Activated CD4-positive, alpha-beta memory T cell treated with anti-CD3 and anti-CD28 coated beads, Interleukin-2, amount 10 ng/mL, durations not matched to agents 7 days and 5 days (primary cell): ENCODE measurements at regions of chr3 and their contacts with region 1.

Region 1: GRCh38 chr3:14178247-14179113 is at the starts of genes LSM3 and XPC:
- DNase-seq: peak; percentile 98
- H3K4me3 Mint-ChIP-seq: peak within 1 kb of the TSS; percentile 84
- H3K27ac Mint-ChIP-seq: peak within 1 kb of the TSS; percentile 92
- H3K4me1 Mint-ChIP-seq: peaks cover 70% of the 10 kb centered on the region
- H3K27me3 Mint-ChIP-seq: no peaks in the 10 kb centered on the region
- total RNA-seq, gene LSM3: 14.2 to 14.3 TPM
- total RNA-seq, gene XPC: 34.2 to 34.8 TPM

Region 2: DNA sequence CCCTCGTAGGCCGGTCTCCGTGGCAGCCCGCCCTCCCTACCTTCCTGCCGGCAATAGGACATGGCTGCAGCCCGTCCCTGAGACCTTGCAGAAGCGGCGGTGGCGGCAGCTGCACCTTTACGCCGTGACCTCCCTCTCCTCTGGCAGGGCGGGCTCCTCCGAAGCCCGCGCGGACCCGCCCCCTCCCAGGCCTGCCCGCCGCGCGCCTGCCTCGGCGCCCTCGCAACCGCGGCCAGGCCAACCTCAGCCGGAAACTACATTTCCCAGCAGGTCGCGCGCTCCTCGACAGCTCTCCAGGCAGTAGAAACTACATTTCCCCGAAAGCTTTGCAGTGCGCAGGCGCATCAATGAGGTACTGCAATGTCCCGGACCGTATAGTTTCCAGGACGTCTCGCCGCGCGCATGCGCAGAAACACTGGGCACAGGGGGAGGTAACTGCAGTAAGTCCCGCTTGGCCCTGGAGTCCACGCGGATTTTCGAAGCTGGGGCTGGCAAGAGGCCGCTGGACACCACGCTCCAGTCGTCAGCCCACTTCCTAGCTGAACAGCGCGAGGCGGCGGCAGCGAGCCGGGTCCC is 53.8 kb before region 1 on chr3 and contains the starts of genes CHCHD4 and TMEM43:
- CTCF ChIA-PET with region 1: interaction called, 13 read pairs
- POLR2A ChIA-PET with region 1: interaction called, 90 read pairs
- DNase-seq: peak; percentile 99
- H3K4me3 Mint-ChIP-seq: peak within 1 kb of the TSS; percentile 92
- H3K27ac Mint-ChIP-seq: peak within 1 kb of the TSS; percentile 90
- H3K4me1 Mint-ChIP-seq: peaks cover 61% of the 10 kb centered on the region
- H3K27me3 Mint-ChIP-seq: no peaks in the 10 kb centered on the region
- total RNA-seq, gene CHCHD4: 11.5 to 12.8 TPM
- total RNA-seq, gene TMEM43: 43.6 to 46.0 TPM

Region 3: DNA sequence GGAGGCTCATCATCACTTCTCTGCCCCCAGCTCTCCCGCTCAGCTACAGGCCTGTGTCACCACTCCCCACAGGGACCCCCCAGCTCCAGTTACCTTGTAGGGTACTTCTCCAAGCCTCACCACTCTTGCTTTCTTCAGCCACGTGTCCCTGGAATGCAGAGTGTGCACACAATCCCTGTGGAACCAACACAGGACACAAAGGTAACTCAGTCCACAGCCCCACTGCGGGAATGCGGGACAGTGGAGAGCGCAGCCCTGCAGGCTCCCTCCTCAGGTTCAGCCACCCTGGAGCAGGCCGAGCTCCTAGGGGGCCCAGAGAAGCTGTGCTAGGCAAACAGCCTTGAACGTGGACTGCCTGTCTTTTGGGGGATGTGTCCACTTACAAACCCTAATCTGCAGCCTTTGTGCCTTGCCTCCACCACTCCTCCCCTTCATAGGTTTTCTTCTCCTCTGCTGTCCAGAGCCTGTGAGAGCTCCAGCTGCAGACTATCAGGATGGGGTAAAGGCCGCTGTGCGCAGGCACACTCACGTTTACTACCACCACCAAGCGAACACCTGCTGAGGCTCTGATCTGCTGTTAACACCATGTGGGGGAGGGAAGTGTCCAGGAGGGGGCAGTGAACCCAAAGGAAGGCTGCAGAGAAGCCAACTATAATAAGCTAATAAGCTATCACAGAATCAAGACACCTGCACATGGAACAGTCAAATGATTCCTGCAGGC is 26.1 kb before region 1 on chr3:
- CTCF ChIA-PET with region 1: interaction called, 4 read pairs
- POLR2A ChIA-PET with region 1: interaction called, 11 read pairs
- DNase-seq: no peak
- H3K4me3 Mint-ChIP-seq: no peak overlapping the region
- H3K27ac Mint-ChIP-seq: no peak overlapping the region
- H3K4me1 Mint-ChIP-seq: no peaks in the 10 kb centered on the region
- H3K27me3 Mint-ChIP-seq: no peaks in the 10 kb centered on the region

Region 4: GRCh38 chr3:14203521-14204079 is 25.1 kb after region 1 on chr3:
- CTCF ChIA-PET with region 1: interaction called, 15 read pairs
- POLR2A ChIA-PET with region 1: interaction called, 11 read pairs
- DNase-seq: peak; percentile 48
- H3K4me3 Mint-ChIP-seq: no peak overlapping the region
- H3K27ac Mint-ChIP-seq: no peak overlapping the region
- H3K4me1 Mint-ChIP-seq: no peaks in the 10 kb centered on the region
- H3K27me3 Mint-ChIP-seq: no peaks in the 10 kb centered on the region

Region 5: GRCh38 chr3:14431892-14432834 is 253.7 kb after region 1 on chr3:
- CTCF ChIA-PET with region 1: no interaction called
- POLR2A ChIA-PET with region 1: interaction called, 11 read pairs
- DNase-seq: peak; percentile 96
- H3K4me3 Mint-ChIP-seq: peak overlapping the region; percentile 75
- H3K27ac Mint-ChIP-seq: peak overlapping the region; percentile 100
- H3K4me1 Mint-ChIP-seq: peaks cover 89% of the 10 kb centered on the region
- H3K27me3 Mint-ChIP-seq: no peaks in the 10 kb centered on the region